ENCODE measurements at regions of chr19 and their contacts with region 1.

Region 1: GRCh38 chr19:36489118-36489919 is at the start of gene ZNF566:
- DNase-seq: peak; percentile 92
- H3K4me3 Mint-ChIP-seq: peak within 1 kb of the TSS; percentile 93
- H3K27ac Mint-ChIP-seq: peak within 1 kb of the TSS; percentile 97
- H3K4me1 Mint-ChIP-seq: peaks cover 19% of the 10 kb centered on the region
- H3K27me3 Mint-ChIP-seq: no peaks in the 10 kb centered on the region
- total RNA-seq, gene ZNF566: 7.3 and 7.7 TPM in 2 replicates

Region 2: DNA sequence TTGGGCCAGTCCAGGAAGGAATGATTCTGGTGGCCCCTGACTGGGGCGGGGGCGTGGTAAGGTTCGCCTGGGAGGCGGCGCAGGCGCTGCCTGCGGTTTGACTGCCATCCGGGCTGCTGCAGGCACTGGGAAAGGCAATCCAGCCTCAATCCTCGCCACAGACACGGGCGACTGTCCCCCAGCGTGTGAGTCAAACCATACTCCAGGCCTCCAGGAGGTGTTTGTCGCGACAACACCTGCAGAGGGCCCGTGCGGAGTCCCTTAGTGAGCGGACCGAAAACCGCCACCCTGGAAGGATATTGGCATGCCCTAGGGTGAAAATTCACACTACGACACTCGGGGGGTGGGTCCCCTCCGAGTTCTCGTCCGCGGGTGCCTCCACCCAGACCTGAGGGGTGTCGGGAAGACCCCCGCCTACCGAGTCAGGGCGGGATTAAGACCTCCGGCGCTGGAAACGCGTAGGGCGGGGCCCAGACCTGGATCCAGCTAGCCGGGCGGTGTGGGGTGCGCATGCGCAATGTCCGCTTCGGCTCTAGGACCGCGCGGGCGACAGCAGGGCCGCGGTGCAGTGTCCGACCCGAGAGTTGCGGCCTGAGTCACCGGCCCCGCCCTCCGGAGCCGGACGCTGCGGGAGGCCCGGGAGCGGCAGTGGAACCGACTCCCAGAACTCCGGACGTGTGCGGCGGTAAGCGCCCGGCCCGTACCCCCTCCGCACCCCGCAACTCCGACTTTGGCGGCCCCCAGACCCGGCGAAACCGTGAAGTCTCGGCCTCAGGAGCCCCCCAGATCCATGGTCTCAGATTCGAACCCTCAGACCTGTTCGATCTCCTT is 349.6 kb before region 1 on chr19 and contains the start of gene CAPNS1:
- intact Hi-C with region 1: loop called (anchors 10 kb)
- DNase-seq: peak; percentile 91
- H3K4me3 Mint-ChIP-seq: peak within 1 kb of the TSS; percentile 94
- H3K27ac Mint-ChIP-seq: peak within 1 kb of the TSS; percentile 95
- H3K4me1 Mint-ChIP-seq: peaks cover 16% of the 10 kb centered on the region
- H3K27me3 Mint-ChIP-seq: no peaks in the 10 kb centered on the region
- total RNA-seq, gene CAPNS1: 424 and 431 TPM in 2 replicates

Region 3: GRCh38 chr19:36418287-36419001 is 70.9 kb before region 1 on chr19 and contains the start of gene ZFP82:
- intact Hi-C with region 1: loop called (anchors 2 kb)
- DNase-seq: peak; percentile 73
- H3K4me3 Mint-ChIP-seq: peak within 1 kb of the TSS; percentile 94
- H3K27ac Mint-ChIP-seq: peak within 1 kb of the TSS; percentile 95
- H3K4me1 Mint-ChIP-seq: peaks cover 13% of the 10 kb centered on the region
- H3K27me3 Mint-ChIP-seq: peaks cover 12% of the 10 kb centered on the region
- total RNA-seq, gene ZFP82: 5.1 and 5.8 TPM in 2 replicates

Region 4: DNA sequence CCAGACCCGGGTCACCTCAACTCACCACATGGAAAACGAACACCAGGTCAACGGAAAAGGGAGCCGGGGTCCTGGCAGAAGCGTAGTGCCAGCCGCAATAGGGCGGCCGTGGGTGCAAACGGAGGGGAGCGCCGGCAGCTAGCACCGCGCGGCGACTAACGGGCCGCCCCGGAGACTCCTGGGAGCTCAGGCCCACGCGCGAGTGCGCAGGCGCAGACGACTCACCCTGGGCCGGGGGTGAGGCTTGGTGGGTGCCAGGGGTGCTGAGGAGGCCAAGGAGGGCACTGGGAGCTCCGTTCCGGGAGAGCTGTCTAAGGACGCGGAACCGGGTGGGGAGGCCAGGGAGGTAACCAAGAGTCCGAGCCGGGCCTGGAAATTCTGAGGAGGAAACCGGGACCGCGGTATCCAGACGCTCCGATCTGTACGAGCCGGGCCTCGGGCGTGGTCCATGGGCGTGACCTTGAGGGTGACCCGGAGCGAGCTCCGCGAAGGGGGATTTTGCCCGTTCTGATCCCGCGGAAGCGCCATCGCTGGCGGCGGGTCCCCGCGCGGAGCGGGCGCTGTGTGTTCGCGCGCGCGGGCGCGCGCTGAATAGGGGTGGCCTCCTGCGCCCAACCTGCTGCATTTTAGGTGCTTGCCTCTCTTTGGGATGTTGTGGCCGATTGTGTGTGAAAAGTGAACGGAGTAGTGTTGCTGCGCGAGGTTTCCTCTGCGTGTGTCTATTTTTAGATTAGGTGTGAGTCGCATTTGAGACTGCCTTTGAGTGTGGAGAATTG is 116.0 kb after region 1 on chr19 and contains the start of gene ZNF382:
- intact Hi-C with region 1: loop called (anchors 1 kb)
- DNase-seq: peak; percentile 81
- H3K4me3 Mint-ChIP-seq: peak within 1 kb of the TSS; percentile 87
- H3K27ac Mint-ChIP-seq: peak within 1 kb of the TSS; percentile 89
- H3K4me1 Mint-ChIP-seq: peaks cover 17% of the 10 kb centered on the region
- H3K27me3 Mint-ChIP-seq: no peaks in the 10 kb centered on the region
- total RNA-seq, gene ZNF382: 8.8 and 10.8 TPM in 2 replicates

Region 5: DNA sequence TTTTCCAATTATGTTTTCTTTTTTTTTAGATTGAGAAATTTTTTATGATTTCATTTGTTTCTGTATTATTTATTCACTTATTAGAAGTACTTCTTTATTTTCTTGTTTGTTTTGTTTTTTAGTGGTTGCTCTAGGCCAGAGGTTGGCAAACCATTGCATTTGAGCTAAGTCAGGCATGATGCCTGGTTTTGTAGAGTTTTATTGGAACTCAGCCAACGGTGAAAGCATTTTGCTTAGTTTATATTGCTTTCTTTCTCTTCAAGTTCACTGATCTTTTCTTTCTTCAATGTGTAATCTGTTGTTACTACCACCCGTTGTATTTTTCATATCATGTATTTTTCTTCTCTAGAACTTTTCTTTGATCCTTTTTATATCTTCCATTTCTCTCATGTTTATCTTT is 217.8 kb after region 1 on chr19:
- intact Hi-C with region 1: no loop called
- DNase-seq: no peak
- H3K4me3 Mint-ChIP-seq: no peak overlapping the region
- H3K27ac Mint-ChIP-seq: no peak overlapping the region
- H3K4me1 Mint-ChIP-seq: no peaks in the 10 kb centered on the region
- H3K27me3 Mint-ChIP-seq: no peaks in the 10 kb centered on the region

Region 6: DNA sequence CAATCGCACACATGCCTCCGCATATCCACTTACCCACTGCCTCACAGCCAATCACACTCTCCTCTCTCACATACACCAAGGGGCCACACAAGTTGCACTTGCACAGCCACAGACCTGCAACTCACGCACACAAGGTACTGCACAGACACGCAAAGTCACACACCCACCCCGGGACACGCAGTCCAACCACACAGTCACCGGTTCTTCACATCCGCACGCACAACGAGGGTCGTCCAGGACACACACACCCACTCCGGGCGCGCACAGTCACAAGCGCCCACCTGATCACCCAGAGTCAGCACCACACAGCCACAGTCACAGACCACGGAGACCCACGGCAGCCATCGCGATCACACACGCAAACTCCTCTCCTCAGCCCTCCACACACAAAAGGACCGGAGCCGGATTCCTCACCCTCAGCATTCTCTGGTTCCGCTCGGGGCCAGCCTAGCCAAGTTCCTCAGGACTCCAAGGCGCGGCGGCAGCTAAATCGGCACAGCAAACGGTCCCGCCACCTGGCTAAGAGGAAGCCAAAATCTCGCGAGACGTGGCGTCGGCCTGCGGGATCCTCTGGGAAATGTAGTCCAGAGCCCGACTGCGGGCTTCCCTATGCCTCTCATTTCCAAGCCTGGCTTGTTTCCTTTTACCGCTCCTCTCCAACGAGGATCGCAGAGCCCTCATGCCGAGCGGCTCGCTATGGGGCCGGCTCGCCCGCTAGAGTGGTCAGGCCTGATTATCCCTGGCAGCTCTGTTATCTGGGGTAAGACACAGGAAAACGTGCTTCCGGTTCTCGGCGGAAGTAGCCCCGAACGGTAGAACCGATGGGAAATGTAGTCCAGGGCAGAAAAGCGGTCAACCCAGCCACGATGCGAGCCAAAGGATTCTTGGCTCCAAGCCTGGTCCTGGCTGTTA is 283.2 kb after region 1 on chr19 and contains the start of gene ZNF850:
- intact Hi-C with region 1: loop called (anchors 1 kb)
- DNase-seq: peak; percentile 91
- H3K4me3 Mint-ChIP-seq: peak within 1 kb of the TSS; percentile 95
- H3K27ac Mint-ChIP-seq: peak within 1 kb of the TSS; percentile 90
- H3K4me1 Mint-ChIP-seq: peaks cover 20% of the 10 kb centered on the region
- H3K27me3 Mint-ChIP-seq: no peaks in the 10 kb centered on the region
- total RNA-seq, gene ZNF850: 3.3 and 4.7 TPM in 2 replicates